Calu3 (cell line): ENCODE measurements at regions of chr11 and their contacts with region 1.

Region 1: DNA sequence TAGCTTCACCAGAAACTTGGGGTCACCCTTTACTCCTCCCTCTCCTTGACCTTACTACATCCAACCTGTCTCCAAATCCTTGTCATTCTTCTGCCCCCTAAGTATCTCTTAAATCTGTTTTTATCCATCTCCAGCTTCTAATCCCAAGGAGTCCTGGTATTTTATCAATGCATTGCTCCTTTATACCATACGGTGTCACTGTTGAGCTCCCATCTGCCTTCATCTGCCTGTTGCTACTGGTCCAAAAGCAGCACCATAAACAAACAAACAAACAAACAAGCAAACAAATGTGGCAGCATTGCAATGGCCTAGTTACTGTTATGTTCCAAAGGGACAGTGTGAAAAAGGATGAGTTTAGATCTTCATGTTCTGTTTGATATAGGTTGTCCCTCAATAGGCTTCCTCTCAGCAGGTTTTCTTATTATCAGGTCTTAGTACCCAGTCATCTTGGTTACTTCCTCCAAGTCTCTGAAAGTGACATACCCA is 34.2 kb downstream of the DNHD1 start:
- DNase-seq: peak; percentile 45
- H3K4me3 Mint-ChIP-seq: no peak overlapping the region
- H3K27ac Mint-ChIP-seq: no peak overlapping the region
- H3K4me1 Mint-ChIP-seq: no peaks in the 10 kb centered on the region
- H3K27me3 Mint-ChIP-seq: no peaks in the 10 kb centered on the region
- CTCF ChIP-seq: peak; percentile 51

Region 2: DNA sequence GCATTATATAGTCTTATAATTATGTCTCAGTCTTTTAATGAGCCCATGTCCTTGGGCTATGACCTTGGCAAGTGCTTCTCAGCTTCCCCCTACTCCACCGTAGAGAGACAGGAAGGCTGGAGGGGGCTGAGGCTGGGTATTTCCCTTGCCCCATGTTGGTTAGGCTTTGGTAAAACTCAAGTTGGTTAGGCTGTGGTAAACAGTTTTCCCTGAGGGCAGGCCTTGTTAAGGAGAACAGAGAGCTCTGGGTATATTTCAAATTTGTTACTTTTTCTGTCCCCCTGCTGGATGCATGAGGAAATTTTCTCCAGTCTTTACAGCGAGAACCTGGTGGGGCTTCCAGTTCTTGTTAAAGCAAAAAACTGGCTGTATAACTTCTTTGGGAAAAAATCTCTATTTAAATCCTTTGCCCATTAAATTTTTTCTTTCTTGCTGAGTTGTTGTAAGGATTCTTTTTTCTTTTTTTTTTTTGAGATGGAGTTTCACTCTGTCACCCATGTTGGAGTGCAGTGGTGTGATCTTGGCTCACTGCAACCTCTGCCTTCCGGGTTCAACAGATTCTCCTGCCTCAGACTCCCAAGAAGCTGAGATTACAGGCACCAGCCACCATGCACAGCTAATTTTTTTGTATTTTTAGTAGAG is 136.5 kb after region 1 on chr11:
- CTCF ChIA-PET with region 1: interaction called, 14 read pairs
- intact Hi-C with region 1: no loop called
- DNase-seq: peak; percentile 8
- H3K4me3 Mint-ChIP-seq: no peak overlapping the region
- H3K27ac Mint-ChIP-seq: no peak overlapping the region
- H3K4me1 Mint-ChIP-seq: no peaks in the 10 kb centered on the region
- H3K27me3 Mint-ChIP-seq: peaks cover 48% of the 10 kb centered on the region
- CTCF ChIP-seq: peak; percentile 52

Region 3: GRCh38 chr11:6705905-6706535 is 174.7 kb after region 1 on chr11:
- CTCF ChIA-PET with region 1: interaction called, 4 read pairs
- intact Hi-C with region 1: loop called (anchors 1 kb)
- DNase-seq: peak; percentile 50
- H3K4me3 Mint-ChIP-seq: no peak overlapping the region
- H3K27ac Mint-ChIP-seq: no peak overlapping the region
- H3K4me1 Mint-ChIP-seq: no peaks in the 10 kb centered on the region
- H3K27me3 Mint-ChIP-seq: peaks cover 50% of the 10 kb centered on the region
- CTCF ChIP-seq: peak; percentile 65